SK-N-SH (cell line): ENCODE measurements at regions of chr19 and their contacts with region 1.

Region 1: GRCh38 chr19:42028304-42029216 is 34.5 kb upstream of the ATP1A3 start:
- DNase-seq: peak; percentile 65
- H3K4me3 ChIP-seq: peak overlapping the region in 1 of 2 experiments; percentile 52; a peak in 1 of 4 replicates
- H3K27ac ChIP-seq: no peak overlapping the region
- H3K4me1 ChIP-seq: no peaks in the 10 kb centered on the region
- H3K27me3 ChIP-seq: no peaks in the 10 kb centered on the region; the same call in 1 of the 2 replicates
- CTCF ChIP-seq: peak; percentile 56
- EP300 ChIP-seq: no peak
- RAD21 ChIP-seq: no peak

Region 2: DNA sequence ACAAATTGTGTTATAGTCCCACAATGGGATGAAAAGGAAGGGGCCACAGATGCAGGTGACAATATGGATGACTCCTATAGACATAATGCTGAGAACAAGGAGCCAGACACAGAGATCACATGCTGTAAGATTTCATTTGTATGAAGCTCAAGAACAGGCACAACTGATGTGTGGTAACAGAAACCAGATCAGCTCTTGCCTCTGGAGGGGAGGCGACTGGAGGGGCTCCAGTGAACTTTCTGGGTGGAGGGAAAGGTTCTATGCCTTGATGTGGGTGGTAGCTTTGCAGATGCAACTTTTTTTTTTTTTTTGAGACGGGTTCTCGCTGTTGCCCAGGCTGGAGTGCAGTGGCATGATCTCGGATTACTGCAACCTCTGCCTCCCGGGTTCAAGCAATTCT is 63.5 kb before region 1 on chr19:
- CTCF ChIA-PET with region 1: interaction called, 10 read pairs
- POLR2A ChIA-PET with region 1: no interaction called
- DNase-seq: no peak
- H3K4me3 ChIP-seq: no peak overlapping the region
- H3K27ac ChIP-seq: no peak overlapping the region
- H3K4me1 ChIP-seq: peaks cover 0 to 3% of the 10 kb centered on the region in 2 experiments; a peak in 1 of 4 replicates
- H3K27me3 ChIP-seq: no peaks in the 10 kb centered on the region
- CTCF ChIP-seq: no peak
- EP300 ChIP-seq: no peak
- RAD21 ChIP-seq: no peak

Region 3: DNA sequence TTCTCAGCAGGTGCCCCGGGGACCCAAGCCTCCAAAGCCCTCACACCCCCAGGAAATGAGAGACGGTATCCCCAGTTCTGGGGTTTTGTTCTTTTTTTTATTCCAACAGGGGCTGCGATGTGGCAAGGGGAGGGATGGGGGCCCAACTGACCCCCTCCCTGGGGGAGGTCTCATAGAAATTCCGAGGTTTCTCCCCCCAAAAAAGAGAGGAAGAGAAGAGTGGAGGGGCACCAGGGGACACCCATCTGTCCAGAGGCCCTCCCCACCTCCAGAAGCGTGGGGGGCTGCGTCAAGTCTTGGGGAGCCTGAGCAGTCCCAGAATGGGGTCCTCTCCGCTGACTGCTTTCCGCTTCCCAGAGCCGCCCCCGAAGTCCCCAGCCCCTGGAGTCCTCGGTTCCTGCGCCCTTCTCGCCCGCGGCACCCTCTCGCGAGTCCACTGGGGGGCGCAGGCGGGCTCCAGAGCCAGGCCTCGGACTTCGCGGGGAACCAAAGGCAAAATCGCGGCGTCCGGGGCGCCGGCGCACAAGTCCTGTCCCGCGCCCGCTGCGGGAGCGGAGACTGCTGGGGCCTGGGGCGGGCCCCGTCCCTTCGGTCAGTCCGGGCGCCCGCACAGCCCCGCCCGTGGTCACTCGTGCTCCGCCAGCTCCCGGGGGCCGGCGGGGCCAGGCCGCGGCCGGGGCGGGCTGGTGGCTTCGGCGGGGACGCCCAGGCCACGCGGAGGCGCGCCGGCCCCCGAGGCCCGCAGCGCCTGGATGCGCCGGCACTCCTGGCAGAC is 30.1 kb before region 1 on chr19:
- CTCF ChIA-PET with region 1: interaction called, 36 read pairs
- POLR2A ChIA-PET with region 1: interaction called, 3 read pairs
- DNase-seq: peak; percentile 89
- H3K4me3 ChIP-seq: peak overlapping the region; percentile 34 to 53; a peak in 3 of 4 replicates
- H3K27ac ChIP-seq: peak overlapping the region in 1 of 2 experiments; percentile 98; a peak in 2 of 4 replicates
- H3K4me1 ChIP-seq: peaks cover 0 to 50% of the 10 kb centered on the region in 2 experiments; a peak in 1 of 4 replicates
- H3K27me3 ChIP-seq: peaks cover 54% of the 10 kb centered on the region
- CTCF ChIP-seq: peak; percentile 60
- EP300 ChIP-seq: no peak
- RAD21 ChIP-seq: peak; percentile 54

Region 4: GRCh38 chr19:42010245-42011126 is 18.1 kb before region 1 on chr19:
- CTCF ChIA-PET with region 1: interaction called, 16 read pairs
- POLR2A ChIA-PET with region 1: no interaction called
- DNase-seq: no peak
- H3K4me3 ChIP-seq: no peak overlapping the region
- H3K27ac ChIP-seq: no peak overlapping the region
- H3K4me1 ChIP-seq: no peaks in the 10 kb centered on the region
- H3K27me3 ChIP-seq: no peaks in the 10 kb centered on the region
- CTCF ChIP-seq: no peak
- EP300 ChIP-seq: no peak
- RAD21 ChIP-seq: no peak

Region 5: DNA sequence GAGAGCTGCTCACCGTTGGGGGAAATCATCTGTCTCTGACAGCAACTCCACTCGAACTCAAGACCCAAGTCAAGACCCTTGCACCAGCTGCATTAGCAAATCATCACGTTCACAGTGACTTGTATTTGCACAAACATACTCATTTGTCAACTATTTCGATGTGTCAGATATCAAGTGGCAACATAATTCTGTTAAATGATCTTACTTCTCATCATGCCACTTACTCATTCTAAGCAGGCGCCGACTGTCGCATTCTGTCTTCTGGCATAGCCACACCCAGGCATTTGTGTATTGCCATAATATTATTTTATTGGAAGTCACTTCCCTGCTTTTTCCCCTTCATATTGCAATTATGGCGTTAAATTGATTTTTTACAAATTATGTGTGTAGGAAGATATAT is 11.5 kb before region 1 on chr19:
- CTCF ChIA-PET with region 1: interaction called, 16 read pairs
- POLR2A ChIA-PET with region 1: no interaction called
- DNase-seq: no peak
- H3K4me3 ChIP-seq: no peak overlapping the region
- H3K27ac ChIP-seq: no peak overlapping the region
- H3K4me1 ChIP-seq: no peaks in the 10 kb centered on the region
- H3K27me3 ChIP-seq: no peaks in the 10 kb centered on the region
- CTCF ChIP-seq: no peak
- EP300 ChIP-seq: no peak
- RAD21 ChIP-seq: no peak

Region 6: GRCh38 chr19:42038666-42039065 is 10.1 kb after region 1 on chr19:
- CTCF ChIA-PET with region 1: interaction called, 25 read pairs
- POLR2A ChIA-PET with region 1: interaction called, 3 read pairs
- DNase-seq: no peak
- H3K4me3 ChIP-seq: no peak overlapping the region
- H3K27ac ChIP-seq: no peak overlapping the region
- H3K4me1 ChIP-seq: no peaks in the 10 kb centered on the region
- H3K27me3 ChIP-seq: 0 out of 2 replicates have a peak, but pooled peaks cover 3% of the 10 kb centered on the region
- CTCF ChIP-seq: no peak
- EP300 ChIP-seq: no peak
- RAD21 ChIP-seq: no peak

Region 7: GRCh38 chr19:42092350-42092749 is 63.8 kb after region 1 on chr19:
- CTCF ChIA-PET with region 1: no interaction called
- POLR2A ChIA-PET with region 1: no interaction called
- DNase-seq: peak; percentile 63
- H3K4me3 ChIP-seq: no peak overlapping the region
- H3K27ac ChIP-seq: no peak overlapping the region
- H3K4me1 ChIP-seq: peaks cover 5 to 16% of the 10 kb centered on the region in 2 experiments; a peak in 3 of 4 replicates
- H3K27me3 ChIP-seq: no peaks in the 10 kb centered on the region
- CTCF ChIP-seq: peak; percentile 53
- EP300 ChIP-seq: no peak
- RAD21 ChIP-seq: peak; percentile 32

Region 8: GRCh38 chr19:42105368-42105767 is 76.8 kb after region 1 on chr19:
- CTCF ChIA-PET with region 1: no interaction called
- POLR2A ChIA-PET with region 1: no interaction called
- DNase-seq: no peak
- H3K4me3 ChIP-seq: no peak overlapping the region
- H3K27ac ChIP-seq: no peak overlapping the region
- H3K4me1 ChIP-seq: peaks cover 0 to 6% of the 10 kb centered on the region in 2 experiments; a peak in 2 of 4 replicates
- H3K27me3 ChIP-seq: no peaks in the 10 kb centered on the region
- CTCF ChIP-seq: no peak
- EP300 ChIP-seq: no peak
- RAD21 ChIP-seq: no peak

Region 9: DNA sequence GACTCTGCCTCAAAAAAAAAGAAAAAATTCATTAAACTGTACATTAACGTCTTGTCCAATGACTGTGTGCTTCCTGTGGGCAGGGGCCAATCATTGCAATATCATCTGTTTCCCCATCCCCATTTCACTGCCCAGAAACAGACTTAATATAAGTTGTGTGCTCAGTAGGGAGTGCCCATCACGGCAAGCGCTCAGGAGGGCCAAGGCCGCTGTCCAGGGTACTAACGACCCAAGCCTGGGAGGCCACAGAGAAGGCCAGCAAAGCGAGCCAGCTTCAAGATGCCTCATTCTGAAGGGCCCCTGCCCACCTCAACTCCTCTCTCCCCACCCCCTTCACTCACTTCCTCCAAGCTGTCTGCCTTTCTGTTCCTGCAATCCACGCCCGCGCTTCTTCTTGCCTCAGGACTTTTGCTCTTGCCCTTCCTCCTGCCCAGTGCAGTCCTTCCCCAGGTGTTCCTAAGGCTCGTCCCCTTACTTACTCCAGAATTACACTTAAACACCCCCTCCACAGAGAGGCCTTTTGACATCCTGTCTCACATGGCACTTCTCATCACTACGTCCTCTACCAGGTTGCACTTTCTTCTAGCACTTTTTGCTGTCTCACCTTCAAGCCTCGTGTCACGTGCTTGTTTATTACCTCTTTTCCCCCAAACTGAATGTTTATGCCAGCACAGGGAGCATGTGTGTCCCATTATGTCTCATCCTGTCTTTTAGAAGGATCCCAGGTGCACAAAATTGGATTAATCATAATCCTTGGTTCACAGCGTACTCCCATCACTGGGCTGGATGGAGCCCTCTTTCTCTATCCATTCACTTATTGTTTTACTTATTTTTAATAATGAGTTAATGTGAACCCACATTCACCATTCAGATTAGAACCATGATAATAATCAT is 115.0 kb after region 1 on chr19:
- CTCF ChIA-PET with region 1: no interaction called
- POLR2A ChIA-PET with region 1: no interaction called
- DNase-seq: no peak
- H3K4me3 ChIP-seq: no peak overlapping the region
- H3K27ac ChIP-seq: peak overlapping the region in 1 of 2 experiments; percentile 47; a peak in 1 of 4 replicates
- H3K4me1 ChIP-seq: peaks cover 0 to 16% of the 10 kb centered on the region in 2 experiments; a peak in 1 of 4 replicates
- H3K27me3 ChIP-seq: 0 out of 2 replicates have a peak, but pooled peaks cover 6% of the 10 kb centered on the region
- CTCF ChIP-seq: no peak
- EP300 ChIP-seq: peak in 1 of 2 experiments; percentile 42; a peak in 1 of 4 replicates
- RAD21 ChIP-seq: no peak